ENCODE measurements at regions of chr15 and their contacts with region 1.

Region 1: GRCh38 chr15:82803793-82804574 is 1.9 kb downstream of the FSD2 start:
- DNase-seq: no peak
- ATAC-seq: no peak
- H3K4me3 ChIP-seq: no peak overlapping the region
- H3K27ac ChIP-seq: no peak overlapping the region
- H3K4me1 ChIP-seq: peaks cover 0 to 1% of the 10 kb centered on the region in 2 donors
- H3K27me3 ChIP-seq: no peaks in the 10 kb centered on the region

Region 2: DNA sequence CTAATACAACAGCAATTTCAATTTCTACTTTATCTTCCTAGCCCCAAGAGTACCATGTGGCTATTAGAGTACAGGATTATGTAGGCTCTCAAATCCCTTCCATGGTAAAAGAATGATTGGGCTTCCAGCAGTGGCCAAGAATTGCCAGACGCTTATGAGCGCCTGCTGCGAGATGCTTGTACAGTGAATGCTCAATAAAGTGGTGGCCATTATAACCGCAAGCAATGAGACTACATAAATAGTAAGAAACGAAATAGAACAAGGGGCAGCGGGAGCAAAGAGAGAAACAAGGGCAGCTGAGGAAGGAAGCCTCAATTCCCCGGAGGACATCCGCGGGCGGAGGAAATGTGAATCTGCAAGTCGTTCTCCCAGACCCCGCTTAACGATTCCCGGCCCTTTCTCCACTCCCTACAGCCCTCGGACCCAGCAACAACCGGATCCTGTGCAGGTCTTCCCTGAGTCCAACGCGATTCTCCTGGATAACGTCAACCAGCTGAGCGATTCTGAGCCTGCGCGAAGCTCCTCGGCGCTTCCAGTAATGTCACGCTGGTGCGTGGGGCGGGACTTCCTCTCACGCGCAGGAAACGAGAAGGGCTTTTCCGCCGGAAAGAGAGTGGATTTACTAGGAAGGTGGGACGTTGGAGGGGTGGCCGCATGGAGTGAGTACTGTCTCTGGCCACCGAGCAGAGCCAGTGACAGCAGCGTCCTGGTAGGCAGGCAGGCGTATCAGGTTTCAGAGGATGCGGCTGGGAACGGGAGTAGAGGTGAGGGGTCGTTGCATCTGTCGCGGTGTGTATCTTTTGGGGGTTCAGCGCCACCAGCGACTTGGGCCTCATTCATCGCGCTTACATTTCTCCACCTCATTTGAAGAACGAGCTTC is 53.8 kb before region 1 on chr15:
- intact Hi-C with region 1: loop called (anchors 5 kb)
- DNase-seq: peak; percentile 94 to 97
- ATAC-seq: peak; percentile 96
- H3K4me3 ChIP-seq: peak overlapping the region; percentile 69
- H3K27ac ChIP-seq: peak overlapping the region; percentile 46 to 85
- H3K4me1 ChIP-seq: peaks cover 2 to 8% of the 10 kb centered on the region in 2 donors
- H3K27me3 ChIP-seq: no peaks in the 10 kb centered on the region

Measured in aorta (tissue), 5 donors.